ENCODE measurements at regions of chr2 and their contacts with region 1.

Region 1: GRCh38 chr2:10668402-10669012 is 21.3 kb downstream of the NOL10 start:
- DNase-seq: no peak

Region 2: DNA sequence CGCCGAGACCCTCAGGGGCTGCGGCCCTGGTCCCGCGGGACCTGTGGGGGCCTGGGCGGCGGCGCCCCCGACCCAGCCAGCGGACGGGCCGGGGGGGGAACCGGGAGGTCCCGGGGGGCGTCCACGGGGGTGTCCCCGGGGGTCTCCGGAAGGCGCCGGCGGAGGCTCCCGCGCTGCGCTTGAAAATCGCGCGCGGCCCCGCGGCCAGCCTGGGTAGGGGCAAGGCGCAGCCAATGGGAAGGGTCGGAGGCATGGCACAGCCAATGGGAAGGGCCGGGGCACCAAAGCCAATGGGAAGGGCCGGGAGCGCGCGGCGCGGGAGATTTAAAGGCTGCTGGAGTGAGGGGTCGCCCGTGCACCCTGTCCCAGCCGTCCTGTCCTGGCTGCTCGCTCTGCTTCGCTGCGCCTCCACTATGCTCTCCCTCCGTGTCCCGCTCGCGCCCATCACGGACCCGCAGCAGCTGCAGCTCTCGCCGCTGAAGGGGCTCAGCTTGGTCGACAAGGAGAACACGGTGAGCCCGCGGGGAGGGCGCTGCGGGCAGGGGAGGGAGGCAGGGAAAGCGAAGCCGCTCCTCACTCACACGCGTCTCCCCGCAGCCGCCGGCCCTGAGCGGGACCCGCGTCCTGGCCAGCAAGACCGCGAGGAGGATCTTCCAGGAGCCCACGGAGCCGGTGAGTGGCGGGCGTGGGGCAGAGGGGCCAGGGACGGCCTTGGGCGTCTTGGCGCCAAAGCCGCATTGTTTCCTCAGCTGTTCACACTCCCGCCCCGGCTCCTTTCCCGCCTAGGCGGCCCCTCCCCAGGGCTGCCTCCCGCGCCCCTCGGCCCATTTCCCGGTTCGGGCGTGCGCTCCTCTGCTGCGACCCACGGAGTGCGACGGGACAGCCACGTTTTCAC is 545.9 kb before region 1 on chr2 and contains the start of gene RRM2:
- intact Hi-C with region 1: loop called (anchors 5 kb)
- DNase-seq: peak; percentile 82 to 99 (median 92)

Region 3: GRCh38 chr2:10448208-10448645 is 220.3 kb before region 1 on chr2 and contains the start of gene ODC1:
- intact Hi-C with region 1: loop called (anchors 5 kb)
- DNase-seq: peak; percentile 84 to 98 (median 90)